MCF 10A (cell line): ENCODE measurements at regions of chr2 and their contacts with region 1.

Region 1: DNA sequence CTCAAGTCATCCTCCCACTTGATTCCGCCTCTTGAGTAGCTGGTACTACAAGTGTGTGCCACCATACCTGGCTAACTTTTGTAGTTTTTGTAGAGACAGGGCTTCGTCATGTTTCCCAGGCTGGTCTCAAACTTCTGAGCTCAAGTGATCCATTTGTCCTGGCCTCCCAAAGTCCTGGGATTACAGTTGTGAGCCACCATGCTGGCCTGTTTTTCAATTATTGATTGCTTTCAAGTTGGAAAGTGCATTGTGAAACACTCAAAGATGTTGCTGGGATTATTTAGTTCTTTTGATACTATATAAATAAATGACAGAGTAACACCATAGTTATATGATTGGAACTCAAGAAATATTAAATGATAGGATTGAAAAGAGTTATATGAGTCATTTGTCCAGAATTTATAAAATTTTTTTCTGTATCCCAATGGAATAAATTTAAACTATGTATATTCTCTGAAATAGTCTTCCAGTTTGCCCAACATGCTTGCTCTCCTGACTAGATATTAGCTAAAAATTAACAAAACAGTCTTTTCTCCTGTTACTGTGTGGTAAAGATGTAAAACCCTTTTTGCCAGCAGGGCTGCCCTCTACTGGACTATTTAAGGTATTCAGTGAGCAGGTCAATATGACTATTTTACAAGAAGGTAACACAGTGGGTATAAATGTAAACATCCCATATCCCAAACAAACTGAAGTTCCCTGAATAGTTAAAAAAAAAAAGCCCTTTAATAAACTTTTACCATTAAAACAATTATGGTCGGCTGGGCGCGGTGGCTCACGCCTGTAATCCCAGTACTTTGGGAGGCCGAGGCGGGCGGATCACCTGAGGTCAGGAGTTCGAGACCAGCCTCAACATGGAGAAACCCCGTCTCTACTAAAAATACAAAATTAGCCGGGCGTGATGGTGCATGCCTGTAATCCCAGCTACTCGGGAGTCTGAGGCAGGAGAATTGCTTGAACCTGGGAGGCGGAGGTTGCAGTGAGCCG is 42.7 kb downstream of the ACSL3 start:
- DNase-seq: peak; percentile 72
- H3K4me3 Mint-ChIP-seq: no peak overlapping the region
- H3K27ac Mint-ChIP-seq: peak overlapping the region; percentile 39
- H3K4me1 Mint-ChIP-seq: peaks cover 50% of the 10 kb centered on the region
- H3K27me3 Mint-ChIP-seq: no peaks in the 10 kb centered on the region
- CTCF ChIP-seq: peak; percentile 67

Region 2: GRCh38 chr2:222797261-222797660 is 106.3 kb before region 1 on chr2:
- CTCF ChIA-PET with region 1: interaction called, 3 read pairs
- POLR2A ChIA-PET with region 1: interaction called, 8 read pairs
- intact Hi-C with region 1: loop called (anchors 1 kb)
- DNase-seq: peak; percentile 53
- H3K4me3 Mint-ChIP-seq: no peak overlapping the region
- H3K27ac Mint-ChIP-seq: no peak overlapping the region
- H3K4me1 Mint-ChIP-seq: peaks cover 18% of the 10 kb centered on the region
- H3K27me3 Mint-ChIP-seq: no peaks in the 10 kb centered on the region
- CTCF ChIP-seq: peak; percentile 46

Region 3: DNA sequence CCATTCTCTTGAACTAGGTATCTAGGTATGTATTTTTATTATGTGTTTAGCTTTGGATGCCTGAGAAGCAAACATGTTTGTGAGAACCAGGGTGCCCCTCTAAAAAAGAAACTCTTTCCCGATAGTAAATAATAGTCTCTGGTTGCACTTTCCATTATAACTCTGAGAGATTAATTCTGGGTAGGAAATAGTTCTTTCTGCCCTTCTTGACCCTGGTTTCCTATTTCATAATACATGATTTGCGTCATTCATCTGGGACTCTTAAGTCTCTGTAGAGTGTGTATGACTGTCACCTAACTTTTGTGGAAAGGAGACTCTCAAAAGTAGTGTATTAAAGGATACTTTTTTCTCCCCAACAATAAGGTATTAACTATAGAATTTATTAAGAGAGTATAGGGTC is 11.2 kb before region 1 on chr2:
- CTCF ChIA-PET with region 1: interaction called, 9 read pairs
- POLR2A ChIA-PET with region 1: interaction called, 13 read pairs
- intact Hi-C with region 1: no loop called
- DNase-seq: peak; percentile 67
- H3K4me3 Mint-ChIP-seq: peak overlapping the region; percentile 53
- H3K27ac Mint-ChIP-seq: peak overlapping the region; percentile 89
- H3K4me1 Mint-ChIP-seq: peaks cover 33% of the 10 kb centered on the region
- H3K27me3 Mint-ChIP-seq: no peaks in the 10 kb centered on the region
- CTCF ChIP-seq: no peak

Region 4: DNA sequence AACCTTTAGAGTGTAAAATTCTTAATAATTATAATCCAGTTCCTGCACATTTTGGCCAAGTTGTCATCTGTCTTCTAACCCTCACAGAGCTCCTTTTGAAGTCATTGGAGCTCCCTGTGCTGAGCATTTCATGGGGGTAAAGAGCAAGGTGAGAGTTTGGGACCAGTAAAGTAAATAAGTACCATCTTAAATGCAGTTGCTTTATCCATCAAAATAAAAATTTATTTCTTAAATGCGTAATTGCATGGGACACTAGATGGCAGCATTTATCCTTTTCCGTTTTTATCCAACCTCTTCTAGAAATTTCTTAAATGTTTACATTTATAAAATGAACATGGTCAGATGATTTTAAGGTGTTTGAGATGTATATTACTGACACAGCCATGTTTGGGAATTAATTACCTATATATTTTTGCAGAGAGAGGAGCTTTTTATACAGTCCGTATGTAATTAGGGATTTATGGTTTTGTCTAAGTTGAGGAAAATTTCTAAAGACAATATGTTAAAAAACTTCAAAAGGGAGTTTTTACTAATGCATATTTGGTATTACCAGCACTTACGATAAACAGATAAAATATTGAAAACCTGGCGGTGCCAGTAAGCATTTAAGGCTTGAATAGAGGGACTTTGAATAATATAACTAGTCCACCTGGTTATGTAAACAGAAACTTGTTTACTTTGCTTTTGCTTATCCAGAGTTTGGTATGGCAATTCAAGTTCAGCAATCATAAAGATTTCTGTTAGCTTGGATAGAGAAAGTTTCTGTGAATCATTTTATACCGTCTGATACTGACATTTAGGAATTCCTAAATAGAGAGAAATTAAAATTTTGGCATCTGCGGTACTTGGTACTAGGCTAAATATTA is 11.8 kb after region 1 on chr2:
- CTCF ChIA-PET with region 1: interaction called, 13 read pairs
- POLR2A ChIA-PET with region 1: no interaction called
- intact Hi-C with region 1: no loop called
- DNase-seq: no peak
- H3K4me3 Mint-ChIP-seq: no peak overlapping the region
- H3K27ac Mint-ChIP-seq: no peak overlapping the region
- H3K4me1 Mint-ChIP-seq: peaks cover 31% of the 10 kb centered on the region
- H3K27me3 Mint-ChIP-seq: no peaks in the 10 kb centered on the region
- CTCF ChIP-seq: peak; percentile 36